Activated CD4-positive, alpha-beta T cell treated with anti-CD3 and anti-CD28 coated beads, Interleukin-2, amount 10 ng/mL, durations not matched to agents 24 days and 14 days (primary cell): ENCODE measurements at regions of chr15 and their contacts with region 1.

Region 1: GRCh38 chr15:72231066-72231846 is at the start of gene PKM:
- DNase-seq: peak; percentile 99
- H3K4me3 Mint-ChIP-seq: peak within 1 kb of the TSS; percentile 95
- H3K27ac Mint-ChIP-seq: peak within 1 kb of the TSS; percentile 98
- H3K4me1 Mint-ChIP-seq: peaks cover 45% of the 10 kb centered on the region
- H3K27me3 Mint-ChIP-seq: no peaks in the 10 kb centered on the region
- total RNA-seq, gene PKM: 2,437 and 2,525 TPM in 2 replicates

Region 2: GRCh38 chr15:72117486-72118399 is 113.5 kb before region 1 on chr15 and contains the start of gene MYO9A:
- intact Hi-C with region 1: loop called (anchors 1 kb)
- DNase-seq: peak; percentile 98
- H3K4me3 Mint-ChIP-seq: peak within 1 kb of the TSS; percentile 95
- H3K27ac Mint-ChIP-seq: peak within 1 kb of the TSS; percentile 99
- H3K4me1 Mint-ChIP-seq: peaks cover 26% of the 10 kb centered on the region
- H3K27me3 Mint-ChIP-seq: peaks cover 17% of the 10 kb centered on the region
- total RNA-seq, gene MYO9A: 19.4 and 21.3 TPM in 2 replicates

Region 3: DNA sequence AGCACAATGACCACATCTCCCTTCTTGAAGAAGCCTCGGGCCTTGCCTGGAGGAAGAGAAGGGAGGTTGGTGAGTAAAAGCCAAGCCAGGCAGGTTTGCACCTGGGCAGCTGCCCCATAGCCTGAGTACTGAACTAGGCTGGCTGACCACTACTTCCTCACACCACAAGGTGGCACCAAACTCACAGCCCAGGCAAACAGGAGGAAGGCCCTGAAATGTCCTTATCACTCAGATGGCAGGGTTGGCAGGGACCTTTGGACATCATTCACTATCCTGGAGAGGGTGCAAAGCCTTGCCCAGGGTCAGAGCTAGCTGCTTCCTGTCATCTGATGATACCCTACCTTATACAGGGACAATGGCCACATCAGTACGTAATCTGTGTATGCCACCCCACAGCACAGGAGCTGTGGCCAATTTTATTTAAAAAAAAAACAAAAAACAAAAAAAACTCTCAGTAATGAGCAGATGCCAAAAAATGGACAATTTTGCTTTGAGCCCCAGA is 31.5 kb before region 1 on chr15:
- intact Hi-C with region 1: loop called (anchors 5 kb)
- DNase-seq: peak; percentile 92
- H3K4me3 Mint-ChIP-seq: no peak overlapping the region
- H3K27ac Mint-ChIP-seq: no peak overlapping the region
- H3K4me1 Mint-ChIP-seq: peaks cover 25% of the 10 kb centered on the region
- H3K27me3 Mint-ChIP-seq: peaks cover 9% of the 10 kb centered on the region

Region 4: GRCh38 chr15:72206677-72207000 is 24.6 kb before region 1 on chr15:
- intact Hi-C with region 1: loop called (anchors 2 kb)
- DNase-seq: no peak
- H3K4me3 Mint-ChIP-seq: no peak overlapping the region
- H3K27ac Mint-ChIP-seq: peak overlapping the region; percentile 51
- H3K4me1 Mint-ChIP-seq: peaks cover 36% of the 10 kb centered on the region
- H3K27me3 Mint-ChIP-seq: no peaks in the 10 kb centered on the region

Region 5: DNA sequence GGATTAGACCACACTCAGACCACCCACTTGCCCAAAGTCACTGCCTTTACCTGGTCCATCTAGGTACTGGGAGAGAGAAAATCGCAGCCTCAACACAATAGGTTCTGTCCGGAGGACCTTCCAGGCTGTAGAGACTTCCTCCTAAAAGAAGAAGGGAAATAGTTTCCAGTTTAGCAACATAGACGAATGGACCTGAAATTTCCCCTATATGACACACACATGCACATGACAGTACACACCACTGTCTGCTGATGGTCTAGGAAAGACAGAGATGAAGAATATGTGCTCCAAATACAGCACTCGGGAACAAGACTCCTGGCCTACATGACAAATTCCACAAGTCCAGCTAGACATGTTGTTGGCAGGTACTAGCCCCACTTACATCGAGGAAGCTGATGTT is 33.8 kb after region 1 on chr15:
- intact Hi-C with region 1: loop called (anchors 2 kb)
- DNase-seq: no peak
- H3K4me3 Mint-ChIP-seq: no peak overlapping the region
- H3K27ac Mint-ChIP-seq: no peak overlapping the region
- H3K4me1 Mint-ChIP-seq: peaks cover 23% of the 10 kb centered on the region
- H3K27me3 Mint-ChIP-seq: no peaks in the 10 kb centered on the region

Region 6: DNA sequence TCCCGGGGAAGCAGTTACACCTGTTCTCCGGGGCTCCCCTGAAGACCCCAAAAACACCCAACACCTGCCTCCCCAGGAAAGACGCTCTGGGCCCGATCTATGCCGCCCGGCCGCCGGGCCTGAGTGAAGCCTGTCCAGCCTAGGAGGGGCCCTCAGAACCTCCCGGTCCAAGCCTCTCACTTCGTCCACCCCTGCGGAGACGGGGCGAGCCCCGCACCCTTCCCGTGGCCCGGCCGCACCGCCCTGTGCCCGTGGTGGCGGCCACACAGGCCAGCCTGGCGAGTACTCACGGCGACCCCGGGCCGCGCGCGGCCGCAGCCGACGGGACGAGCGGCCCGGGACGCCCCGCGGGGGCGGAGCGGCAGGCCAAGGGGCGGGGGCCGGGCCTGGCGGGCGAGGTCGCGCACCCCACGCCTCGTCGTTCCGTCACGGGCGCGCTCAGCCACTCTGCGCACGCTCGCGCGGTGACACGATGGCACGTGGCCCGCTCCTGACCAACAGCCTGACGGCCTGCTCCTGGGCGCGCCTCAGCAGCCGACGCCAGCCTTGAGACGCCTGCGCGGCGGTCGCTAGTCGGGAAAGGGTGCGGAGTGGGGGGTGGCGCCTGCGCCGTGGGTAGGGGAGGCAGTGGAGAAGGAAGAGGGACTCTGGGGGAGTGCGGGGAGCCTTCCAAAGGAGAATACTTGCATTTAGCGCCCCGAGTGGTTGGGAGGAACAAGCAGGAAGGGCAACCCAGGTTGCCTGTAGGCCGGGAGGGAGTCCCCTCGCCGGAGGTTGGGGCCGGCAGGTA is 41.2 kb after region 1 on chr15 and contains the start of gene PARP6:
- intact Hi-C with region 1: loop called (anchors 1 kb)
- DNase-seq: peak; percentile 100
- H3K4me3 Mint-ChIP-seq: peak within 1 kb of the TSS; percentile 94
- H3K27ac Mint-ChIP-seq: peak within 1 kb of the TSS; percentile 88
- H3K4me1 Mint-ChIP-seq: peaks cover 32% of the 10 kb centered on the region
- H3K27me3 Mint-ChIP-seq: peaks cover 3% of the 10 kb centered on the region
- total RNA-seq, gene PARP6: 69.7 and 78.6 TPM in 2 replicates

Region 7: DNA sequence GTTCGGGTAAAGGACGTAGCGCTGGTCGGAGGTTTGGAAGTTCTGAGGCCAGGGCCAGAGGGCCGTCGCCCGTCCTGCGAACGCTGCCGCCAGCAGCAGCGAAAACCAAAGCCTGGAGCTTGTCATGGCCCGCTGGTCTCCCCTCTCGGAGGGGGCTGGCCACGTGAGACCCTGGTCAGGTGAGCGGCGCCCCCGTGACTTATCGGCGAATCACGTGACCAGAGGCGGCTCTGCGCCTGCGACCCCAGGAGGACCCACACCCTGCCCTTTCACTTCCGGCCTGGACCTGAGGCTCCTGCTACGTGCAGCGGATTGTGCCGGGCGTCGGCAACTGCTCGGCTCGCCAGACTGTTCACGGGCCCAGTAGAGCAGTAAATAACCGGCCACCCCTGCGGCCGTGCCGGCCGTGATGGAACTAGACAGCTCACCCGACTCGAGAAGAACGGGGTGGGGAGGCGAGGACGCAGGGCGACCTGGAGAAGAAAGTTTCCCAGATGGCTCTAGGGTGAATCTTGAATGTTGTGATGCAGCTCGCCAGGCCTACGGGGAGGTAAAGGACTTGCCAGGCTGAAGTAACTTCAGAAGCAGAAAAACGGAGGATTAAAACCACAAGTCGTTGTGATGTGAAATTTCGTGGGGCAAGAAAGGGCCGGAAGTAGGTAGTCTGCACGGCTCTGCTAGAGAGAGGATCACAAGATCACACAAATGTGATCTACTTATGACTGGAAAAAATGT is 144.8 kb after region 1 on chr15 and contains the start of gene HEXA:
- intact Hi-C with region 1: loop called (anchors 5 kb)
- DNase-seq: peak; percentile 99
- H3K4me3 Mint-ChIP-seq: peak within 1 kb of the TSS; percentile 90
- H3K27ac Mint-ChIP-seq: peak within 1 kb of the TSS; percentile 91
- H3K4me1 Mint-ChIP-seq: peaks cover 31% of the 10 kb centered on the region
- H3K27me3 Mint-ChIP-seq: no peaks in the 10 kb centered on the region
- total RNA-seq, gene HEXA: 54.3 and 59.4 TPM in 2 replicates